Adrenal gland (tissue), 19 donors: ENCODE measurements at regions of chr6 and their contacts with region 1.

Region 1: GRCh38 chr6:165850434-165851019 is 187.5 kb upstream of the PDE10A start:
- DNase-seq: peak; percentile 49 to 91 (median 78)
- H3K4me3 ChIP-seq: no peak overlapping the region
- H3K27ac ChIP-seq: no peak overlapping the region
- H3K4me1 ChIP-seq: no peaks in the 10 kb centered on the region
- H3K27me3 ChIP-seq: peaks cover 9% of the 10 kb centered on the region
- CTCF ChIP-seq: peak; percentile 75 to 100 (median 90)
- POLR2A ChIP-seq: no peak

Region 2: DNA sequence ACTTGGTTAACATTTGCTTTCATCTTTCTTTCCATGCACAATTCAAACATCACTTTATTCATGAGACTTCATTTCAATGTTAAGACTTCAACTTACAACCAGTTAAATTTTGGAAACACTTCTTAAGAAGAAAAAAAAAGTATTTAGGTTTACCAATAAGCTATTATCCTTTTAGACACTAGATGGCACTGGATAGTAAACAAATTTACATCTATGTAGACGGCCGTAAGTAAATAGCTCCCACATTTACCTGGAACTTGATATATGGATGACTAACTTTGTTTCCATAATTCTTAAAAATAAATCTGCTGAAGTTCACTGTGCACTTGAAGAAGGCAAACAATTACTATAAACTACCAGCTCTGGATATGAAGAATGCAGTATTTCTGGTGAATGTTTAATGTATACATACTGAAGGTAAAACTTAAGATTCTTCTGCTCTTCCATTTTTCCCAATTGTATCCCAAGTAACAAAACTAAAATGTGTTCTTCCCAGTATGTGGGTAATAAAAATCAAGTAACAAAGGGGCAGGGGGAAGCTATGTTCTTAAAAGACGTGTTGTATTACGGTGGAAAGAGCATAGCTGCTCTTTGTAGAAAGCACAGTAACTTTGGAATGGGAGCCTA is 410.5 kb before region 1 on chr6:
- intact Hi-C with region 1: loop called (anchors 5 to 10 kb)
- DNase-seq: no peak
- H3K4me3 ChIP-seq: no peak overlapping the region
- H3K27ac ChIP-seq: no peak overlapping the region
- H3K4me1 ChIP-seq: no peaks in the 10 kb centered on the region
- H3K27me3 ChIP-seq: no peaks in the 10 kb centered on the region
- CTCF ChIP-seq: peak; percentile 42 to 66 (median 55)
- POLR2A ChIP-seq: no peak

Region 3: GRCh38 chr6:165448210-165448609 is 402.3 kb before region 1 on chr6:
- intact Hi-C with region 1: loop called (anchors 5 to 10 kb)
- DNase-seq: no peak
- H3K4me3 ChIP-seq: no peak overlapping the region
- H3K27ac ChIP-seq: no peak overlapping the region
- H3K4me1 ChIP-seq: no peaks in the 10 kb centered on the region
- H3K27me3 ChIP-seq: no peaks in the 10 kb centered on the region
- CTCF ChIP-seq: no peak
- POLR2A ChIP-seq: no peak

Region 4: GRCh38 chr6:165729307-165729936 is 121.1 kb before region 1 on chr6:
- intact Hi-C with region 1: loop called (anchors 2 to 10 kb)
- DNase-seq: peak; percentile 25 to 73 (median 47)
- H3K4me3 ChIP-seq: no peak overlapping the region
- H3K27ac ChIP-seq: no peak overlapping the region
- H3K4me1 ChIP-seq: no peaks in the 10 kb centered on the region
- H3K27me3 ChIP-seq: no peaks in the 10 kb centered on the region
- CTCF ChIP-seq: peak; percentile 53 to 90 (median 66)
- POLR2A ChIP-seq: no peak